ENCODE measurements at regions of chr7 and their contacts with region 1.

Region 1: GRCh38 chr7:99997545-99998137 is 17.8 kb upstream of the ZKSCAN1 start:
- DNase-seq: peak; percentile 77
- H3K4me3 ChIP-seq: peak overlapping the region; percentile 32 to 56 (median 40)
- H3K27ac ChIP-seq: peak overlapping the region; percentile 81 to 88 (median 84)
- H3K4me1 ChIP-seq: peaks cover 8 to 31% (median 23%) of the 10 kb centered on the region in 4 donors
- H3K27me3 ChIP-seq: no peaks in the 10 kb centered on the region
- CTCF ChIP-seq: peak; percentile 35 to 68 (median 55)
- EP300 ChIP-seq: no peak
- POLR2A ChIP-seq: peak; percentile 55

Region 2: GRCh38 chr7:99958564-99959227 is 38.9 kb before region 1 on chr7:
- in situ Hi-C with region 1: no loop called
- intact Hi-C with region 1: no loop called
- DNase-seq: no peak
- H3K4me3 ChIP-seq: no peak overlapping the region
- H3K27ac ChIP-seq: no peak overlapping the region
- H3K4me1 ChIP-seq: no peaks in the 10 kb centered on the region
- H3K27me3 ChIP-seq: peaks cover 17% of the 10 kb centered on the region
- CTCF ChIP-seq: no peak
- EP300 ChIP-seq: no peak
- POLR2A ChIP-seq: no peak

Region 3: GRCh38 chr7:100049441-100050311 is 52.0 kb after region 1 on chr7 and contains the start of gene ZSCAN21:
- in situ Hi-C with region 1: loop called in 2 of 4 experiments (anchors 10 kb)
- intact Hi-C with region 1: no loop called
- DNase-seq: peak; percentile 87
- H3K4me3 ChIP-seq: peak within 1 kb of the TSS; percentile 71 to 86 (median 81)
- H3K27ac ChIP-seq: peak within 1 kb of the TSS; percentile 91 to 97 (median 96)
- H3K4me1 ChIP-seq: peaks cover 7 to 32% (median 15%) of the 10 kb centered on the region in 4 donors
- H3K27me3 ChIP-seq: no peaks in the 10 kb centered on the region
- CTCF ChIP-seq: peak in 2 of 5 experiments; percentile 16 to 22
- EP300 ChIP-seq: no peak
- POLR2A ChIP-seq: peak; percentile 80
- total RNA-seq, gene ZSCAN21: 0.75 to 28.7 (median 10.0) TPM

Region 4: DNA sequence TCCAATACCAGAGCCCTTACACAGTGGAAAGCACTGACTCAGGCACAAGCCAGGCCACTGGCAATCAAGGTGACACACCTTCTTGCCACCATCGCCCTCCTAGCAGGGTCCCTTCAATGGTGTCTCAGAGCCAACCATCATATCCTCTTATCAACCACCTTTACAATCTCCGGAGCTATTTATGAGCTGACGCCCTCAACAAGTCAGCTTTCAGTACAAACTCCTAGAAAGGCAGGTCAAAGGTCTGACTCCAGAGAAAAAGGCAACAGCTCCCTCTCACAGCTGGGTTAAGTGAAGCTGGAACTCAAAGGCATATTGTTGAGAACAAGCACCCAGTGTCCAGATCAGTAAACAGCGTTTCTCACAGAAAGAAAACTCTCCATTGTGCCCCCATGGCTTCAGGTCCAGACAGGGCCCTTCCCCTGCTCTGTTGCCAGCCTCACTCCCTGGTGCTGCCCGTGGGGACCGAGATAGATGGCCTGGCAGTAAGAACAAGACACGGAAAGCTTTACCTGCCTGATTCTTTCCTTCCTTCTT is 81.5 kb after region 1 on chr7:
- in situ Hi-C with region 1: loop called in 1 of 4 experiments (anchors 10 kb)
- intact Hi-C with region 1: no loop called
- DNase-seq: peak; percentile 78
- H3K4me3 ChIP-seq: peak overlapping the region in 1 of 4 donors; percentile 93
- H3K27ac ChIP-seq: peak overlapping the region; percentile 94 to 97 (median 96)
- H3K4me1 ChIP-seq: peaks cover 19 to 55% (median 53%) of the 10 kb centered on the region in 4 donors
- H3K27me3 ChIP-seq: no peaks in the 10 kb centered on the region
- CTCF ChIP-seq: no peak
- EP300 ChIP-seq: no peak
- POLR2A ChIP-seq: peak; percentile 47

Measured in transverse colon (tissue), 4 donors.